Breast epithelium (tissue), 4 donors: ENCODE measurements at regions of chr11 and their contacts with region 1.

Region 1: GRCh38 chr11:66479394-66480116 is 679 bp upstream of the DPP3 start:
- DNase-seq: peak; percentile 28 to 61
- H3K4me3 ChIP-seq: peak overlapping the region; percentile 64 to 87 (median 72)
- H3K27ac ChIP-seq: peak overlapping the region; percentile 90 to 95
- H3K4me1 ChIP-seq: no peaks in the 10 kb centered on the region
- H3K27me3 ChIP-seq: no peaks in the 10 kb centered on the region
- CTCF ChIP-seq: peak in 1 of 3 donors; percentile 6
- POLR2A ChIP-seq: no peak

Region 2: GRCh38 chr11:66464916-66465315 is 14.6 kb before region 1 on chr11:
- intact Hi-C with region 1: loop called (anchors 1 kb)
- DNase-seq: no peak
- H3K4me3 ChIP-seq: no peak overlapping the region
- H3K27ac ChIP-seq: no peak overlapping the region
- H3K4me1 ChIP-seq: peaks cover 0 to 4% of the 10 kb centered on the region in 2 donors
- H3K27me3 ChIP-seq: no peaks in the 10 kb centered on the region
- CTCF ChIP-seq: no peak
- POLR2A ChIP-seq: no peak